ENCODE measurements at regions of chr4 and their contacts with region 1.

Region 1: DNA sequence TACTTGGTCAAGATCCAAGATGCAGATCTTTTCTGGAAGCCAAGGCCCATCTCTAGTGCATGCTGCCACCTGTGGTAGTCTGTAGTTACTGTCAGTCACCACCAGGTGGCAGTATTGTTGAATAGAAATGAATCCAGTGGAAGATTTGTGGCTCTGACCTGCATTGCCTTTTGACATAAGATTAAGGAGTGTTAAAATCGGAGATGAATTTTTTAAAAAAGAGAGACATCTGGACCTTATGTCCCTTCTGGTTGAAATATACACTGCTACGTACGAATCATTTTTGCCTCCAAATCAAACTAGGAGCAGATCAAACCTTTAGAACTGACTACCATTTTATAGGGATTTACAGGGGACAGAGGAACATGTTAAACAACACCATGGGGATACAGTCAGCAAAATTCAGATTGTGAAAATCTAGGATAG is 46.9 kb upstream of the RHOH start:
- DNase-seq: peak; percentile 86
- ATAC-seq: peak; percentile 65
- H3K4me3 ChIP-seq: no peak overlapping the region
- H3K27ac ChIP-seq: peak overlapping the region; percentile 14
- H3K4me1 ChIP-seq: no peaks in the 10 kb centered on the region
- H3K27me3 ChIP-seq: no peaks in the 10 kb centered on the region
- CTCF ChIP-seq: peak; percentile 74

Region 2: GRCh38 chr4:40086421-40086820 is 63.6 kb before region 1 on chr4:
- CTCF ChIA-PET with region 1: no interaction called
- POLR2A ChIA-PET with region 1: no interaction called
- intact Hi-C with region 1: no loop called
- DNase-seq: no peak
- ATAC-seq: no peak
- H3K4me3 ChIP-seq: no peak overlapping the region
- H3K27ac ChIP-seq: no peak overlapping the region
- H3K4me1 ChIP-seq: no peaks in the 10 kb centered on the region
- H3K27me3 ChIP-seq: no peaks in the 10 kb centered on the region
- CTCF ChIP-seq: no peak

Region 3: DNA sequence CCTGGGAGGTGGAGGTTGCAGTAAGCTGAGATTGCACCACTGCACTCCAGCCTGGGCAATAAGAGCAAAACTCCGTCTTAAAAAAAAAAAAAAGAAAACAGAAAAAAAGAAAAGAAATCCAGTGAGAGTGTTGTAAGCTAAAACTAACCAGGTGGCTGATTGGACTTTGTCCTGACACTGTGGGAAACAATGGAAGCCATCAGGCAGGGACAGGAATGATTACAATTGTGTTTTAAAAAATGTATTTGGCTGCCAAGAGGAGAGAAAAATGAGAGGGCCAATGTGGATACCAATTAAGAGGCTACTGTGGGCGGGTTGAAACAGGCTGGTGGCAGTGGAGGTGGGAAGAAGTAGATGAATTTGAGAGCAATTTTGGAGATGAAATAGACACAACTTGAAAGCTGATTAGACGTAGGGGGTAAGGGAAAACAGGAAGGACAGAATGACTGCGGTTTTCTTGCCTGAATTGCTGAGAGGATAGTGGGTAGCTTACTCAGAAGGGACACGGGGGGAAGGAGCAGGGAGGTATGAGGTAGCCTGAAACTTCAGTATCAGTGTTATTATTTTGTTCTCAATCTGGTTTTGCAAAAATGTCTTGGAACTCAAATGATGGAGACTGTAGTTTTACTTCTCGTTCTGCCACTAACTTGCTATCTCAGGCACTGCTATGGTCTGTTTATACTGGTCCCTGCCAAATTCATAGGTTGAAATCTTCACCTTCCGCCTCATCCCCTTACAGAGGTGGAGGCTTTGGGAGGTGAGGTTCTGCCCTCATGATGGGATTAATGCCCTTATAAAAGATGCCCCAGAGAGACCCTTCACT is 139.6 kb after region 1 on chr4:
- CTCF ChIA-PET with region 1: no interaction called
- POLR2A ChIA-PET with region 1: interaction called, 11 read pairs
- intact Hi-C with region 1: no loop called
- DNase-seq: no peak
- ATAC-seq: no peak
- H3K4me3 ChIP-seq: no peak overlapping the region
- H3K27ac ChIP-seq: peak overlapping the region; percentile 90
- H3K4me1 ChIP-seq: peaks cover 19% of the 10 kb centered on the region
- H3K27me3 ChIP-seq: no peaks in the 10 kb centered on the region
- CTCF ChIP-seq: no peak

Measured in PC-3 (cell line).